ENCODE measurements at regions of chr16 and their contacts with region 1.

Region 1: DNA sequence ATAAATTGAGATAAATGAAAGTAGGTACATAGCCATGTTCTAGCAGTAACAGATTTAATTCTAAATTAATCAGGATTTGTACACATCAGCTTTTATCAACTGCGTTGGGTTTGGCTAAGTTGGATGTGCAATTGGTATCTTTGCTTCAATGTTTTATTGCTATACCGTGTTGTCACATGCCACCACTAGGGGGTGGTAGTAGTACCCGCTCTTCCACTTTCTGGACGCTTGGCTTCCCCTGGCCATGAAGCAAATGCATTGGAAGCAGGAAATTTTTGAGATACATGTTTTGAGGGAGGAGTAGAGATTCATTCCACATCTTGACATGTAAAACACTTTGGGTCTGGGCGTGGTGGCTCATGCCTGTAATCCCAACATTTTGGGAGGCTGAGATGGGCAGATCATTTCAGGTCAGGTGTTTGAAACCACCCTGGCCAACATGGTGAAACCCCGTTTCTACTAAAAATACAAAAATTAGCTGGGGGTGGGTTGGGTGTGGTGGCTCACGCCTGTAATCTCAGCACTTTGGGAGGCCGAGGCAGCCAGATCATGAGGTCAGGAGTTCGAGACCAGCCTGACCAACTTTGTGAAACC is 58.6 kb downstream of the EMP2 start:
- DNase-seq: no peak

Region 2: DNA sequence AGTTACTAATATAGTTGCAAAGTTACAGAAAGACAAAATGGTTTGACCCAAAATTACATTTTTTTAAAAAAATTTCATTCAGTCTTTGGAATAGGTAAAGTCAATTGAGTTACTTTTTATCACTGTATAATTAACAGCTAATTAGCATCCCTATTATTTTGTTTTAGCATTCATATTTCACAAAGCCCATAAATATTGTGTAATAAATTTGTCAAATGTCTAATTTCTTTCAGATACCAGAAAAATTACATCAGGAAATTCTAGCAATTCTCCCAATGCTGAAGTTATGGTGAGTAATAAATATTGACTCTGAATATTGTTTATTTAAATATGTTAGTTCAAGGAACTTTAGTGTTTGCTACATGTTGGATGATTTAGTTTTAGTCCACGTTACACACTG is 48.5 kb before region 1 on chr16:
- intact Hi-C with region 1: no loop called
- DNase-seq: no peak

Region 3: DNA sequence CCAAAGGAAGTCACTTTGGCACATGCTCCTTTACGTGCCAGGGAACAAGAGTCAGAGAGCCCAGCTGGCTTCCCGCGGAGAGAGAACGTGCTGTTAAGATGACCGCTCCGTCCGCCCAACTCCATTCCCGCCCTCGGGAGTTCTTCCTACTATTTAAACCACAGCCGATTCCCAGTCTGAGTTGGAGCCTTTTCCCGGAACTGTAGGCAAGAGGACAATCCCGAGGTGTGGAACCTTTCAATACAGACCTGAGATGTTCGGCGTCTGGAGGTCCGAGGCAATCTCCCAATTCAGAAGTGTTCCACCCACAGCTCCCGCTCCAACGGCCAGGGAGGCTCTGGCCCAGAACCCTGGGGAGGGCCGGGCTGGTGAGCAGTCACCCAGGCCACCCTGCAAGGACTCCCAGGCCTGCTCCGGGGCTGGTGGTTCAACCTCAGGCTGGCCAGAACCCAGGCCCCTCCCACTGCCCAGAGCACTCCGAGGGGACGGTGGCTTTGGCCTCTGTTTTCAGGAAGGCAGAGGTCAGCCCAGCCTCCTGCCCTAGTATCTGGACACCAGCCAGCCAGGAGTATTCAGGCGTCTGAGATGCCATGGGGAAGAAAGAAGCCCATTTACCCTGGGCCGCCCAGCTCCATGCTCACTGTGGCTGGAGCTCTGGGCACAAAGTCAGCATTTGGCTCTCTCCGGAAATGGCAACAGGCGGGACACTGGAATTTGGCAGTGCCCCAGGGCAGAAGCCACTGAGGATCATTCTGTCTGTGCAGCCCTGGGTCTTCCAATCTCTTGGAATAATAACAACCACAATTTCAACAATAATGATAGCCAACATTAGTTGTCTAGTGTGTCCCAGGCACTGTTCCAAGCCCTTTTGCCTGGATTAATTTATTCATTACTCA is 37.2 kb after region 1 on chr16:
- intact Hi-C with region 1: loop called (anchors 5 kb)
- DNase-seq: peak; percentile 86

Measured in cardiac septum (tissue), 1 donor.